ENCODE measurements at regions of chr2 and their contacts with region 1.

Region 1: GRCh38 chr2:29314816-29315571 is 199.8 kb downstream of the CLIP4 start:
- DNase-seq: peak; percentile 61
- H3K4me3 Mint-ChIP-seq: peak overlapping the region; percentile 66
- H3K27ac Mint-ChIP-seq: peak overlapping the region; percentile 86
- H3K4me1 Mint-ChIP-seq: peaks cover 65% of the 10 kb centered on the region
- H3K27me3 Mint-ChIP-seq: peaks cover 9% of the 10 kb centered on the region

Region 2: DNA sequence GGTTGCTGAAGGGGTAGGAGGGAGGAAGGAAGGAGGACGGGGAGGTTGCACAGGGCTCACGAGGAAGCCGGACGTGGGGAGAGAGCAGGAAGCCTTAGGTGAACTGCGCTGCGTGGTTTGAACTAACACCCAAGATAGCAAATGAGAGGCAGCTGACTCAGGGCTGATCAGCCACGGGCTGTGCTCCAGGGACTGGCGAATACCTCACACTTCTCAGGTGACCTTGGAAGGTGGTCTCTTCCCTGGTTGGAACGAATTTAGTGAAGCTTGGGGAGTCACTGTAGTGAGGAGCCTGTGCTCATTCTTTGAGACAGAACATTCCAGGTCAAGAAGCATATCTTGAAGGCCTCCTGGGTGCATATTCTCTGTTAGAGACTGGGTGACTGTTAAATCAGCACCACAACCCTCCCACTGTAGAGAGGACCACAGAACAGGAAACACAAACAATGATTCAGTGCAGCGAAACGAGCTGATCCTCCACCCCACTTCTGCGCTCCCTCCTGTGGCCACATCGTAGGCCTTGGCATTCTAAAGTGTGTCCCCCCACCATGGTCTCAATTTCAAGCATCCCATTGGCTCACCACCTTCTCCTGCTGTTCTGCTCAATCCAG is 300.1 kb before region 1 on chr2:
- intact Hi-C with region 1: loop called (anchors 5 kb)
- DNase-seq: peak; percentile 65
- H3K4me3 Mint-ChIP-seq: peak overlapping the region; percentile 88
- H3K27ac Mint-ChIP-seq: peak overlapping the region; percentile 99
- H3K4me1 Mint-ChIP-seq: peaks cover 65% of the 10 kb centered on the region
- H3K27me3 Mint-ChIP-seq: peaks cover 2% of the 10 kb centered on the region

Region 3: GRCh38 chr2:29255004-29255403 is 60.0 kb before region 1 on chr2:
- intact Hi-C with region 1: no loop called
- DNase-seq: no peak
- H3K4me3 Mint-ChIP-seq: no peak overlapping the region
- H3K27ac Mint-ChIP-seq: no peak overlapping the region
- H3K4me1 Mint-ChIP-seq: no peaks in the 10 kb centered on the region
- H3K27me3 Mint-ChIP-seq: peaks cover 16% of the 10 kb centered on the region

Measured in activated T-helper 1 cell treated with anti-CD3 and anti-CD28 coated beads, Interleukin-12 subunit alpha, Interleukin-12 subunit beta, Interleukin-2, Interleukin-4 antibody, amounts not matched to agents 30 ng/mL and 10 ng/mL and 1 ng/mL, durations not matched to agents 14 hours and 24 hours and 36 hours (primary cell).